Sciatic nerve (tissue), 2 donors: ENCODE measurements at regions of chr10 and their contacts with region 1.

Region 1: DNA sequence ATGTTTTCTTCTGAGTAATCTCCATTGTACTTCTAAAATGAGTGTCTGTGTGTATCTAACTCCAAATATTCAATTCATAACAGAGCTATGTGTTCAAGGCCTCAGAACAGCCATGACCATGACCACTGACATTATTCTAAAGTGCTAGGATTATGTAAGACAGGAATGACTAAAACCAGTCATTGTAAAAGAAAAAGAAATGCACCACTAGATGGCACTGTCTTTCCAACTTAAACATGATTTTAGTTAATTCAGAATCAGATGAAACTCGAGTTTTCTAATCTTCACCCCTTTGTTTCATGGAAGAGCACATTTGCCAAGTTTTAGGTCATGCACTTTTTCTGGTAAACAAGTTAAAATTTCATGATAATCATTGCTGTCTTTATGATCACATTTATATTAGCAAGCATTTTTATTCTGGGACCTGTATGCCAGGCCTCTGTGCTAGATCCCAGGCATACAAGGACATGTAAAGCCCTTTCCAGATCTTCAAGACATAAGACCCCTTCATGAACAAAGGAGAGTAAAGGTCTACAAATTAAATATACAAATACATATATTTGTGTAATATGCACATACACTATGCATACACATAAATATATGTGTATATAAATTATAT is 26.1 kb upstream of the RSU1 start:
- DNase-seq: no peak
- ATAC-seq: peak; percentile 78

Region 2: DNA sequence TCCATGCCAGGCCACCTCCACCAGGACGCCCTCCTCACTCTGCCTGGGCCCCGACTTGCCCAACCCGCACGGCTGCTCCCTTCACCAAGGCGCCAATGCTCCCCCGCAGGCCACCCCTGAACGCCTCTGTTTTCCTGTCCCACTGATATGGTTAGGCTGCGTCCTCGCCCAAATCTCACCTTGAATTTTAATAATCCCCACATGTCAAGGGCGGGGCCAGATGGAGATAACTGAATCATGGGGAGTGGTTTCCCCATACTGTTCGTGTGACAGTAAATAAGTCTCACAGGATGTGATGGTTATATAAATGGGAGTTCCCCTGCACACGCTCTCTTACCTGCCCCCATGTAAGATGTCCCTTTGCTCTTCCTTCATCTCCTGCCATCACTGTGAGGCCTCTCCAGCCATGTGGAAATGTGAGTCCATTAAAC is 56.0 kb before region 1 on chr10:
- intact Hi-C with region 1: no loop called
- DNase-seq: no peak
- ATAC-seq: no peak

Region 3: GRCh38 chr10:16923309-16923708 is 79.9 kb after region 1 on chr10:
- intact Hi-C with region 1: loop called (anchors 5 kb)
- DNase-seq: no peak
- ATAC-seq: peak; percentile 73

Region 4: GRCh38 chr10:17161775-17162174 is 318.4 kb after region 1 on chr10:
- intact Hi-C with region 1: no loop called
- DNase-seq: no peak
- ATAC-seq: no peak

Region 5: DNA sequence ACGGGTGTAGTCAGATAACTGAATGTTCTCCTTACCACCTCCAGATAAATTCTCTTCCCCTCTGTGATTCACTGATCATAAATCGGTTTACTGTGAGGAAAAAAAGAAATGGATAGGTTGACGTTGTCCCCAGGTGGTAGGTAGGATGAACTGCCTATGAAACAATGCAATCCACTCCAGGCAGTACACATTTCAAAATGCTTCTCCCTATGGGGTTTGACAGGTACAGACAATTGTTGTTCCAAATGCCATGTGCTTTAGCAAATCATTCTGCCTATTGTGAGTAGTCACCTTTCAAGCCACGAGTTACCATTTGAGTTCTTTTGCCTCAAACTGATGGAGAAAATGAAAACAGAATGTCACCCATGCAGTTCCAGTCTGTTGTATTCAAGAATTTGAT is 406.5 kb after region 1 on chr10:
- intact Hi-C with region 1: loop called (anchors 5 kb)
- DNase-seq: no peak
- ATAC-seq: no peak

Region 6: DNA sequence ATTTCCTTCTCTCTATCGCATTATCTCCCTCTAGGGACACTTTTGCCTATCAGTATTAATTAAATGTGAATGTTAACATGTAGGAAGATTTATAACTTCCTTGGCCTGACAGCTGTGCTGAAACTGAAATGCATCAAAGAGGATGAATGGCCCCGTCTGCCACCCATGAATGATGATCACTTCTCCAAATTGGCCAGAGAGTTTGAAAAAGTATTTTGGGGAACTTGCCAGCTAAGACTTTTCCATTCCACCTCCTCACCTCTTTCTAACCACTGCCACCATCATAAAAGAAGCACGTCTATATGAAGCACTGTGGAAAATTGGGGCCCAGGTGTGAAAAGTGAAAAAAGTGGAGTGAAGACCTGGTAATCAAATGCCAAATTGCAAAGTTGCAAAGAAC is 636.5 kb after region 1 on chr10:
- intact Hi-C with region 1: no loop called
- DNase-seq: no peak
- ATAC-seq: no peak